ENCODE measurements at regions of chr9 and their contacts with region 1.

Region 1: DNA sequence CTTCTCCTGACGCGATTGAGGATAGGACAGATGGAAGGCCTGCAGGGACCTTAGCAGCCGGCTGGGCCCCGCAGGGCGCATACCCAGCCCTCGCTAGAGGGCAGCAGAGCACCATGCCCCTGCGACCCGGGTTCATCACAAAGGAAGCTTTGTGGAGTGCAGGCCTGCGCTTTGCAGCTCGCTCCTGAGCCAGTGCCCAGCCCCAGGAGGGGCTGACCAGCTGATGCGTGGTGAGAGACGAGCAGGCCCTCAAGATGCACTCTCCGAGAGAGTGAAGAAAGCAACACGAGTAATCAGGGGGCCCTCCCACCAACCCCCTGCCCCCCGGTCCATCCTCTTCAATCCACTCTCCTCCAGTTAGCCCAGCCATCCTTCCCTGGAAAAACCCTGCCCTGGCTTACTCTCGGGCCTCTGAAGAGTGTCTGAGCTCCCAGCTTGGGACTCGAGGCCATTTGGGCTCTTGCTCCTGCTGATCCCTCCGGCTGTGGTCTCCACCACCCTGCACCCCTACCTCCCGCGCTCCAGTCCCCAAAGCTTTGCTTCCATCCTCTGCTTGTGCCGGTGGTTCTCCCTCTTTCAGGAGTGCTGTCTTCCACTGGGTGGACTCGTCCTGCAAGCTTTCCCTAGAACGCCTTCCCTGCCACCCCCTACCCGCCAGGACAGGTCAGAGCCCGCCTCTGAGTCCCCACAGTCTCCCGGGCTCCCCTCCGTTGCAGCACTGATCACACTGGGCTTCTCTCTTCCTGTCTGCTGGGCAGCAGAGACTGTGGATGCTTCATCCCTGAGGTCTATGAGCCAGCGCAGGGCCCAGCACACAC is 9.1 kb upstream of the KIF12 start:
- DNase-seq: peak in 1 of 2 experiments; percentile 74
- H3K4me3 ChIP-seq: no peak overlapping the region
- H3K27ac ChIP-seq: no peak overlapping the region
- H3K4me1 ChIP-seq: no peaks in the 10 kb centered on the region
- H3K27me3 ChIP-seq: peaks cover 53% of the 10 kb centered on the region
- CTCF ChIP-seq: peak; percentile 81

Region 2: DNA sequence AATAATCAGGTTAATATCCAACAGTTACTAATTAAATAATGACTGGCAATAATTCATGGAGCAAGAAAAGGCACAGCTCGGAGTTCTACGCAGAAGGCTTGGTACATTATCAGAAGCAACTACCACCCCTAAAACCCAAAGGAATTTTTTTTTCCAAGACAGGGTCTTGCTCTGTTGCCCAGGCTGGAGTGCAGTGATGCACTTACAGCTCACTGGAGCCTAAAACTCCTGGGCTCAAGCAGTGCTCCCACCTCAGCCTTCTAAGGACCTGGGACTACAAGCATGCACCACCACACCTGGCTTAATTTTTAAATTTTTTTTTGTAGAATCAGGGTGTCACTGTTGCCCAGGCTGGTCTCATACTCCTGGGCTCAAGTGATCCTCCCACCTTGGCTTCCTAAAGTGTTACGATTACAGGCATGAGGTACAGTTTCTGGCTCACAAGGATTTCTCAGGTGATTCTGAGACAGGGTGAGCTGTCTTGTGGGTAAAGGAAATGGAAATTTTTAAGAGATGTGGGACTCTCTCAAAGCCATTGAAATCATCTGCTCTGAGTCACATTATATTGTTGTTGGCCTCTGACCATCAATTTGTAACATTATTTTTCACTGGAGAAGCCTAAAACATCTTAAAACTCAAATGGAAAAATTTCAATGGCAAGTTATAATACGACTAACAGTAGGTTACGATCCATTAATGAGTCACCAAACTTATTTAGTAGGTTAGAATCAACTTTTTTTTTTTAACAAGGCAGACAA is 1748.0 kb before region 1 on chr9:
- CTCF ChIA-PET with region 1: no interaction called
- POLR2A ChIA-PET with region 1: no interaction called
- intact Hi-C with region 1: no loop called
- DNase-seq: peak in 1 of 2 experiments; percentile 57
- H3K4me3 ChIP-seq: no peak overlapping the region
- H3K27ac ChIP-seq: peak overlapping the region; percentile 35
- H3K4me1 ChIP-seq: peaks cover 11% of the 10 kb centered on the region; the same call in 1 of the 2 replicates
- H3K27me3 ChIP-seq: no peaks in the 10 kb centered on the region
- CTCF ChIP-seq: no peak

Region 3: DNA sequence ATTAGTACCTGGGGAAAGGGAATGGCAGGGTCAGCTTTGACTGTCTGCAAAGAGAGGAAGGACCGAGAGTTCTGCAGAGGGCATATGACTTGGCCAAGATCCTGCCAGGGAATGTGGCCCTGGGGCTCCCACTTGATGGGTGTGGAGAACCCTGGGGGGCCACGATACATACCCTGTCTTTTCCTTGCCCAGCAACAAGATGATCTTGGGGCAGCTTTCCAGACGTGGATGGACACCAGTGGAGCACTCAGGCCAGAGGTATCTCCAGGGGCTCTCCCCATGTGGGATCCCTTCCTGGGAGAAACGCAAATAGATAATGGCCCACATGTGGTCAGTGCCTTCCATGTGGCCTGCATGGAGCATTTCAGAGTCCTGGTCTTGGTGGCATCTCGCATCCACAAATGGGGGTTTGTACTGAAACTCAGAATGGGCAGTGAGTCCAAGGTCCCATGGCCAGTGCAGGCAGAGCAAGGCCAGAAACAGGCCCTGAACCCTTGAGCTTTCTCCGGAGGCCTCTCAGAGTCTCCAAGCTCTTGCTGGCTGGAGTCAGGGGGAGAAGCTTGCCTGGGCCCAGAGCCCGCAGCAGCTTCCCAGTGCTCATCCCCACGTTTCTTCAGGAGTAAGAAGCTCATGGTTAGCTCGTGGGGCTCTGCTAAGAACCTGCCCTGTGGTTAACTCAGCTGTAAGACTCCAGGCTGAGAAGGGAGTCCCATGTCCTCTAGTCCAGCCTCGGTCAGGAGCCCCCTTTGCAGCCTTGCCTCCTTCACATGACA is 196.4 kb after region 1 on chr9:
- CTCF ChIA-PET with region 1: no interaction called
- POLR2A ChIA-PET with region 1: no interaction called
- intact Hi-C with region 1: loop called (anchors 1 kb)
- DNase-seq: no peak
- H3K4me3 ChIP-seq: no peak overlapping the region
- H3K27ac ChIP-seq: no peak overlapping the region
- H3K4me1 ChIP-seq: no peaks in the 10 kb centered on the region
- H3K27me3 ChIP-seq: 0 out of 2 replicates have a peak, but pooled peaks cover 8% of the 10 kb centered on the region
- CTCF ChIP-seq: no peak

Region 4: DNA sequence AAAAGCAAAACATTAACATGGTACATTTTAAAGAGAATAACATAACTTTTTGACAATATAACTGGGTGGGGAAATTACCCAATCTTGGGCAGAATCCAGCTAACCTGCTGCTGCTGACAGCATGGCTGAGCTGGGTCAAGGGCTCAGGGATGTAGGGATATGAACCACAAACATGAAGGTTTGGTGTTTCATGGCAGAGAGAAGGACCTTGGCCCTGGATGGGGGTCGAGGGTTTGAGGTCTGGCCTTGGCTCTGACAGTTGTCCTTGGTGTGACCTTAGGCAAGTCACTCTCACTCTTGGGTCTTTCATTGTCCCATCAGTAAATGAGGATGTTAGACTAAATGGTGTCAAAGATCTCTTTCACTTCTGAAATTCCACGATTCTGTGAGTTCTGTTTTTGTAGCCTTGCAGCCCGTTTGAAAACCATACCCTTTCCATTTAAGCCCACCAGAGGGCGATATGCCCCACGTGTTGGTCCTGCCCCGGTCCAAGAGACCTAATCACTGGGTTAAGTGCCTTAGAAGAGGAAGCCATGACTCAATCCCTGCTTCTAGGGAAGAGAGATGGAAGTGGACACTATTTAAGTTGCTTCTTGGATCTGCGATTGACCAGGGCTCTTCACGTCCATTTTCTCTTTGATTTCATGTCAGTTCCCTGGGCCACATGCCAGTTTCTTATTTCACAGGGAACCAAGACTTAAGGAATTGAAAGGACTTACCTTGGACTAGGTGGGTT is 630.5 kb after region 1 on chr9:
- CTCF ChIA-PET with region 1: no interaction called
- POLR2A ChIA-PET with region 1: no interaction called
- intact Hi-C with region 1: no loop called
- DNase-seq: peak; percentile 68 to 69
- H3K4me3 ChIP-seq: no peak overlapping the region
- H3K27ac ChIP-seq: no peak overlapping the region
- H3K4me1 ChIP-seq: peaks cover 19% of the 10 kb centered on the region
- H3K27me3 ChIP-seq: no peaks in the 10 kb centered on the region
- CTCF ChIP-seq: peak; percentile 92

Measured in PC-9 (cell line).